ENCODE measurements at regions of chr7 and their contacts with region 1.

Region 1: DNA sequence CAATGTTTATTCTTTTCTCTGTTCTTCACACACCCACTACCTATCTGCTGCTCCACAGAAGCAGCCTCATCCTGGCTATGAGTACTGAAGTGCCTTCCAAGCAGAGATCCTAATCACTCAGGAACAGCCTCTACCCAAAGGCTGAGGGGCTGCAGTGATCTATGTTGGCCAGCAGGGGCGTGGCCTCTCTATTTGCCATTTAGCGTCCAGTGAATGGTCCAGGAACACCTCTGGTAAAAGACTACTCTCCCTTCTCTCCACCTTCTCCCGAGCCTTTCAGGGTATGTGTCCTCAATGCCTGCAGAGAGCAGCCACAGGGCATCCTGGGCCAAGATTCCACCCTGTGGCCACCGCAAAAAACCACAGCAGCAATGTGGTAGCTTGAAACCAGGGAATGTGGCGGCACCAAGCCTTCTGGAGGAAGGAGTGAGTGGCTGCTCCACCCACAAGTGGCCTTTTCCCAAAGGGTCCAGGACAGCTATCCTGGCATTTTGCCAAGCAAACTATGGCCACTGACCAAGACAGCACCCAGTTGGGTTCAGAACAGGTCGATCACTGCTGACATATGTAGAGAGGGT is 70.9 kb downstream of the SYPL1 start:
- DNase-seq: peak; percentile 59
- H3K27ac ChIP-seq: no peak overlapping the region
- CTCF ChIP-seq: peak; percentile 81

Region 2: GRCh38 chr7:105567024-105567423 is 474.2 kb before region 1 on chr7:
- CTCF ChIA-PET with region 1: interaction called, 10 read pairs
- POLR2A ChIA-PET with region 1: no interaction called
- DNase-seq: no peak
- H3K27ac ChIP-seq: no peak overlapping the region
- CTCF ChIP-seq: no peak

Region 3: DNA sequence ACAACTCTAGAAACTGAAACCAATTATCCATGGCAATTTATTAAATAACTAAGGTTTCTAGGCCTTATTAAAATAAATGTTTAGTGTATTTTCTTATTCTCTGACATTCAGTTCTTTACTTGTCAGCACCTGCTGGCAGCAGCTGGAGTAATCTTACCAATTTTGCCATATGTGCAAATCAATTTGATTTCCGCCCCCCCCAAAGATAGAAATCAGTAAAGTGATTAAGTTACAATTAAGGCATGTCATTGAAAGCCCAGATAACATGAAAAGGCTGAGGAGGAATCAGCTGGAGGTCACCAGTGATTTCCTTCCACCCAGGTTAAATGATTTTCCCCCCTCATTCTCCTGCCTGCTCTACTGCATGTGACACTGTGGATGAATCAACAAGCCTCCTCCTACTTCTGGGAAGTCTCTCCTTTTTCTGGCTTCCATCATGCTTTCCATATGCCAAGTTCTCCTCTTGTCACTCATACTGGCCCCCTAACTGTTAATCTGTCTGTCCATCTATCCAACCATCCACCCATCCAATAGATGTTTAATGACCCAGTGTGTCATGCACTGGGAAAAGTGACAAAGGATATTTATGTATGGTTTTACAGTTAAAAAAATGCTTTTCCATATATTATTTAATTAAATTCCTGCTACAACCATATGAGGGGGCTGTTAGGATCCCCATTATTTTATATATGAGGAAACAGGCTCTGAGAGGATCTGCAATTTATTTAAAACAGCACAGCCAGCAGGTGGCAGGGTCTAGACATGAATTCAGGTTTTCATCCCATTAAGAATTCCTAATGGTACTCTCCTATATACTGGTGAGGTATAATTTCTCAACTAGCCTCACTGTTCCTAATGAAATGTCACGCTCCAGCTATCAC is 281.3 kb before region 1 on chr7:
- CTCF ChIA-PET with region 1: interaction called, 19 read pairs
- POLR2A ChIA-PET with region 1: no interaction called
- DNase-seq: peak; percentile 70
- H3K27ac ChIP-seq: no peak overlapping the region
- CTCF ChIP-seq: peak; percentile 82

Region 4: DNA sequence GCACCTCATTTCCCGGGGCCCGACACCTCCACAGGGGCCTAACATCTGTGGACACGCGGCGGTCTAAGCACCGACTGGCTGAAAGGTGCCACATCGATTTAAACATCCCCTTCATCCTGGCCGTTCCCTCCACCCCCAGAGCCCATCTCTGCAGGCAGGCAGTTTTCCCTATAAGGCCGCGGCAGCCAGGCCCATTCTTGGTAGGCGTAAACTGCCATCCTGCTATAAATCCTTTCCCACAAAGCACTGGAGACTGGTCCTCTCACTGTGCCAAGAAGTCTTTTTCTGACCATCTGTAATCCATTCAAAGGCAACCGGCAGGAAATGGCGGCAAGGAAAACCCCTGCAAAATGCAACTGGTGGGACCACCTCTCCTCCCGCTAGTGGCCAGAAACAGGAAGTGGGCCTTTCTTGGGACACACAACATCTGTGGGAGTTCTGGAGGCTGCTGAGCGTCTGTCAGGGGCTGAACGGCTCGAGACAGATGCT is 187.3 kb before region 1 on chr7:
- CTCF ChIA-PET with region 1: no interaction called
- POLR2A ChIA-PET with region 1: no interaction called
- DNase-seq: no peak
- H3K27ac ChIP-seq: no peak overlapping the region
- CTCF ChIP-seq: no peak

Region 5: DNA sequence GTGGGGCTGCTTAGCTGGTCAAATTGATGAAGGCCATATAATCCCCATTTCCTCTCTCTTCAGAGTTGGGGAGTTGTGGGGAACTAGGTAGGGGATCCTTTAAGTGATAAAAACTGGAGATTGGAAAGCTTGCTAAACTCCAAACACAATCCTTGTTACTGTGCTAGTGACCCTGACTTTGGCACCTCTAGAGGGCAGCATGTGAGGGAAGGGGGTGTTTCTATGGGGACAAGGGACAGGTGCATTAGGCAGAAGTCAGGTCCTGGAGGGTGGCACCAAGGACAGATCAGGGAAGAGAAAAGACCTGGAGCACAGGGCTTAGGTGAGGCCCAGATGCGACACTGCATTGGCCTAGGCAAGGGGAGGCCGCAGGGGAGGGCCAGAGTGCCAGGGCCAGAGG is 11.3 kb before region 1 on chr7:
- CTCF ChIA-PET with region 1: interaction called, 10 read pairs
- POLR2A ChIA-PET with region 1: no interaction called
- DNase-seq: no peak
- H3K27ac ChIP-seq: no peak overlapping the region
- CTCF ChIP-seq: no peak

Region 6: DNA sequence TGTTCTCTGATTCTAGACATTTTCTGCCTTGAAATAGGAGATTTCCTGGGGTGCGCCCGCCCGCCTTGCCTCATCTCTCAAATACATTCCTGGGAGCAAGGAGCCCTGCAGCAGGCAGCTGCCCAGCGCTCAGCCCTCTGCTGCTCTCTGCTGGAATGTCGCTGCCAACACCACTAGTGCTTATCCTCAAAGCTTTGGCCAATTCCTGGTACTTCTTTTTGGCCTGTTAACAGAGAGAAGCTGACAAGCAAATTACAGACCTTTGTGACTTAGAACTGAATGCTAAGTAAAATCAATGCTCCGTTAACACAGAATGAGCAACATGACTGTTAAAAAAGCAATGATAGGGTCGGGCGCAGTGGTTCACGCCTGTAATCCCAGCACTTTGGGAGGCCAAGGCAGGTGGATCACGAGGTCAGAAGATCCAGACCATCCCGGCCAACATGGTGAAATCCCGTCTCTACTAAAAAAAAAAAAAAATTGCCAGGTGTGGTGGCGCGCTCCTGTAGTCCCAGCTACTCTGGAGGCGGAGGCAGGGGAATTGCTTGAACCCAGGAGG is 112.7 kb after region 1 on chr7:
- CTCF ChIA-PET with region 1: interaction called, 15 read pairs
- POLR2A ChIA-PET with region 1: no interaction called
- DNase-seq: peak; percentile 87
- H3K27ac ChIP-seq: peak overlapping the region; percentile 3
- CTCF ChIP-seq: peak; percentile 99